PC-3 (cell line): ENCODE measurements at regions of chr4 and their contacts with region 1.

Region 1: DNA sequence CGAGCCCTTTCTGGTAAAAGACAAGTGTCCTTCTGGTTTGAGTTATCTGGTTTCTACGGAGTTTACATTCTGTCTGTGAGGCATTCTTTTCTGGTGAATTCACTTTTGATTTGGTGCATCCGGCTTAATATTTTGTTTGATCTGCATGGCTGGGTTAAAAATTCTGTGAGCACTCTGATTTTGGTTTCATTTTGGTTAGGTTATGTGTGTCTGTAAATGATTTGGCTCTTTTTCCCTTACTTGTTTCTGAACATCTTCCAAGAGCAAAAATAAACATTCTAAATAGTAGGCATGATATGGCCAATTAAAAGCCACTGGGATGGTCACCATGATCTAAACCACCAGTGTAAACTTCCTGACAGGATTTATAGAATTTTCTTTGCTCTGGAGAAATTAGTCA is 85.7 kb upstream of the PTPN13 start:
- DNase-seq: peak; percentile 71
- ATAC-seq: peak; percentile 79
- H3K4me3 ChIP-seq: peak overlapping the region; percentile 65
- H3K27ac ChIP-seq: peak overlapping the region; percentile 90
- H3K4me1 ChIP-seq: peaks cover 43% of the 10 kb centered on the region
- H3K27me3 ChIP-seq: no peaks in the 10 kb centered on the region
- CTCF ChIP-seq: no peak

Region 2: DNA sequence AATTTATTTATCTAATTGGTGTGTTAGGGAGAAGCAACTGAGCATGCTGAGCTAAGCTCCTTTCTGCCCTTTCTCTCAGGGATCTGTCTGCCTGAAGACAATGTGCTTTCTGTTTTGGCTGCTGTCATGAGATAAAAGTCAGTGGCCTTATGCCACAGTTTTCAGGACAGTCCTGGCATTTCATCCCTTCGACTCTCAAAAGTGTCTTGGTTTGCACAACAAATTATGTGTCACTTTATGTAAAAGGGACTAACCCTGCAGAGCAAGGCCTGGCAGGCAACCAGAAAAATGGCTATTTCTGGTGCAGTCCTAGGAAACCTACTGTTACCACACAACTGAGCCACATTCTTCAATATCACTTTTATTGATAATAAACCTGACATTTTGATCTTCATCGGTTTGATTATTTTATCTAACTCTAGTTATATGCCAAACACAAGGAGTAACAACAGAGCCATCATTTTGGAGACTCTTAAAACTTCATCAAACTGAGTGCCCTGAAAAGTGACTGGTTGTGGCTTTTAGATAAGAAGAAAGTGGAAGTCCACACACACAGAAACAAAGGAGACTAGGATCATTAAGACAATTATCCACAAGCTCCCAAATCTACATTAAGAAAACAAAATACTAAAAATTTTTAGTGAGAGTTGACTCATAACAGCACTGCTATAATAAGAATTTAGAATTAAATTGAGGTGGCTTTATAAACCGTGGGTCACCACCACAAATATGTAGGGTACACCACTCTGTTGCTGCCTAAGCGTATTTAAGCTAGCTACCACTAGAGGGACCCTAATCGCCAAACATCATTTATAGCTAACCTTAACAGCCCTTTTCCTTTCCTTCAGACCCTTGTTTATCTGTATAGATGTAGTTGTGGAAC is 10.2 kb before region 1 on chr4:
- CTCF ChIA-PET with region 1: no interaction called
- POLR2A ChIA-PET with region 1: no interaction called
- intact Hi-C with region 1: loop called (anchors 1 kb)
- DNase-seq: peak; percentile 71
- ATAC-seq: peak; percentile 42
- H3K4me3 ChIP-seq: no peak overlapping the region
- H3K27ac ChIP-seq: peak overlapping the region; percentile 84
- H3K4me1 ChIP-seq: peaks cover 55% of the 10 kb centered on the region
- H3K27me3 ChIP-seq: no peaks in the 10 kb centered on the region
- CTCF ChIP-seq: peak; percentile 80

Region 3: DNA sequence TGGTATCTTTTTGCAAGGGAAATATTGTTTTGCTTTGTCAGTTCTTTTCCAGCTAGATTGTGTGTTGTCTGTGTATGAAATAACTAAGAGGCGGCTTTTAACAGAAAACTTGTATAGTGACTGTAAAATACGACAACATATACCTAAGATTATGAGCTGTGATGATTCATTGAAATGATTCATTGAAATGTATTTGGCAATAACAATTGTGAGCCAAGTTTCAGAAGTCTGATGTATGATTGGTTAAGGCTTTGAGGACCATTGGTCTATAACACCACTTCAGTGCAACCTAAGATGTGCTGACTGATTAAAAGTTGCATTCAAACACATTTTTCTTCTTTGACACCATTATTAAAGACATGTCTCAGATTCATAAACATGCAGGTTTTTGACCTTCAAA is 162.3 kb after region 1 on chr4:
- CTCF ChIA-PET with region 1: no interaction called
- POLR2A ChIA-PET with region 1: no interaction called
- intact Hi-C with region 1: loop called (anchors 10 kb)
- DNase-seq: peak; percentile 91
- ATAC-seq: peak; percentile 77
- H3K4me3 ChIP-seq: no peak overlapping the region
- H3K27ac ChIP-seq: peak overlapping the region; percentile 56
- H3K4me1 ChIP-seq: peaks cover 26% of the 10 kb centered on the region
- H3K27me3 ChIP-seq: no peaks in the 10 kb centered on the region
- CTCF ChIP-seq: no peak

Region 4: GRCh38 chr4:86720508-86721068 is 212.2 kb after region 1 on chr4:
- CTCF ChIA-PET with region 1: no interaction called
- POLR2A ChIA-PET with region 1: interaction called, 23 read pairs
- intact Hi-C with region 1: no loop called
- DNase-seq: peak; percentile 24
- ATAC-seq: peak; percentile 56
- H3K4me3 ChIP-seq: no peak overlapping the region
- H3K27ac ChIP-seq: peak overlapping the region; percentile 10; the same call in 1 of the 2 replicates
- H3K4me1 ChIP-seq: peaks cover 12% of the 10 kb centered on the region
- H3K27me3 ChIP-seq: no peaks in the 10 kb centered on the region
- CTCF ChIP-seq: no peak